K562 (cell line): ENCODE measurements at regions of chr11 and their contacts with region 1.

Region 1: GRCh38 chr11:32960553-32961164 is 55.0 kb upstream of the DEPDC7 start:
- DNase-seq: peak in 3 of 4 experiments; percentile 6 to 55 (median 11)
- ATAC-seq: peak; percentile 67
- H3K4me3 ChIP-seq: no peak overlapping the region
- H3K27ac ChIP-seq: no peak overlapping the region
- H3K4me1 ChIP-seq: no peaks in the 10 kb centered on the region
- H3K27me3 ChIP-seq: no peaks in the 10 kb centered on the region
- CTCF ChIP-seq: peak in 2 of 3 experiments; percentile 42 to 79; a peak in 4 of 6 replicates
- EP300 ChIP-seq: no peak
- POLR2A ChIP-seq: no peak
- RAD21 ChIP-seq: peak; percentile 76 to 84

Region 2: GRCh38 chr11:32884770-32885384 is 75.8 kb before region 1 on chr11:
- CTCF ChIA-PET with region 1: no interaction called
- POLR2A ChIA-PET with region 1: no interaction called
- in situ Hi-C with region 1: no loop called
- intact Hi-C with region 1: loop called (anchors 10 kb)
- DNase-seq: peak in 3 of 4 experiments; percentile 23 to 38 (median 29)
- ATAC-seq: peak; percentile 90
- H3K4me3 ChIP-seq: no peak overlapping the region
- H3K27ac ChIP-seq: no peak overlapping the region
- H3K4me1 ChIP-seq: no peaks in the 10 kb centered on the region
- H3K27me3 ChIP-seq: peaks cover 0 to 6% of the 10 kb centered on the region in 2 experiments; a peak in 2 of 5 replicates
- CTCF ChIP-seq: peak; percentile 21 to 68 (median 56); a peak in 5 of 6 replicates
- EP300 ChIP-seq: no peak
- POLR2A ChIP-seq: no peak
- RAD21 ChIP-seq: peak in 1 of 2 experiments; percentile 60; a peak in 3 of 4 replicates

Region 3: GRCh38 chr11:33329705-33330329 is 369.2 kb after region 1 on chr11:
- CTCF ChIA-PET with region 1: interaction called, 3 read pairs
- POLR2A ChIA-PET with region 1: no interaction called
- in situ Hi-C with region 1: loop called (anchors 25 kb)
- intact Hi-C with region 1: loop called (anchors 5 kb)
- DNase-seq: peak; percentile 26 to 74 (median 40)
- ATAC-seq: peak; percentile 96
- H3K4me3 ChIP-seq: no peak overlapping the region
- H3K27ac ChIP-seq: no peak overlapping the region
- H3K4me1 ChIP-seq: no peaks in the 10 kb centered on the region
- H3K27me3 ChIP-seq: no peaks in the 10 kb centered on the region
- CTCF ChIP-seq: peak; percentile 68 to 85 (median 72)
- EP300 ChIP-seq: no peak
- POLR2A ChIP-seq: no peak
- RAD21 ChIP-seq: peak; percentile 75 to 88

Region 4: GRCh38 chr11:33531743-33532181 is 571.1 kb after region 1 on chr11:
- CTCF ChIA-PET with region 1: no interaction called
- POLR2A ChIA-PET with region 1: no interaction called
- in situ Hi-C with region 1: no loop called
- intact Hi-C with region 1: no loop called
- DNase-seq: no peak
- ATAC-seq: no peak
- H3K4me3 ChIP-seq: no peak overlapping the region
- H3K27ac ChIP-seq: no peak overlapping the region
- H3K4me1 ChIP-seq: no peaks in the 10 kb centered on the region
- H3K27me3 ChIP-seq: peaks cover 0 to 13% of the 10 kb centered on the region in 2 experiments; a peak in 2 of 5 replicates
- CTCF ChIP-seq: no peak
- EP300 ChIP-seq: no peak
- POLR2A ChIP-seq: no peak
- RAD21 ChIP-seq: no peak

Region 5: DNA sequence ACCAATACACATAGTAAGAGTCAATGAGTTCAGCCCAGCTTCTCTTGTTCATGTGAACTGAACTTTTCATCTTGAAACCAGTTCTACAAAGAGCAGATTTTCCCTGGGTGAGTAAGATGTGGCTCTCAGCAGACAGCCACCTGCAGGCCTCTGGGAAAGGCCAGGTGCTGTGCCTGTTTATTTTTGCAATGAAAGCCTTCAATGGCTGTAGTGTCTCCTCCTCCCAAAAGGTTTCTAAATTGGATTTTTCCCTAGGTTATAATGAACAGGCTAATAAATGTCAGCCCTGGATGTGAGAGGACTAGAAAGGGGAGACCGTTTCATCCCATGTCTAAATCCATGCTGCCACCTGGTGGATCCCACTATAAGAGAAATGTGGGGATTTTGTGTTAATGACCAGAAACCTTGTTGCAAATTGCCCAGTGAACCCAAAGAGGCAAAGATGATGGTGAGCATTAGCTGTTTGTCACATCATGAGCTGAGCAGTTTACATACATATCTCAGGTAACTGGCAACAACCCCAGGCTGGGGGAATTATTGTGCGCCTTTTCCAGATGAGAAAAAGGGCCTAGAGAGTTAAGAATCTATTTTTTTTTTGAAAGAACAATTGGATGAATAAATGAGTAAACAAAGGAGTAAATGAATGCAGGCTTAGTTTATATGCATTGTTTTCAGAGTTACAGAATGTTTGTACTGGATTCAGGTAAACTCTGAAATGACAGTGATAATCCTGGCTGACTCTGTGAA is 727.2 kb after region 1 on chr11:
- CTCF ChIA-PET with region 1: interaction called, 11 read pairs
- POLR2A ChIA-PET with region 1: no interaction called
- in situ Hi-C with region 1: no loop called
- intact Hi-C with region 1: loop called (anchors 5 kb)
- DNase-seq: peak; percentile 40 to 72 (median 59)
- ATAC-seq: peak; percentile 80
- H3K4me3 ChIP-seq: no peak overlapping the region
- H3K27ac ChIP-seq: no peak overlapping the region
- H3K4me1 ChIP-seq: peaks cover 5 to 10% of the 10 kb centered on the region in 2 experiments; a peak in 4 of 5 replicates
- H3K27me3 ChIP-seq: peaks cover 3 to 18% of the 10 kb centered on the region in 2 experiments; a peak in 4 of 5 replicates
- CTCF ChIP-seq: peak; percentile 77 to 89 (median 79)
- EP300 ChIP-seq: no peak
- POLR2A ChIP-seq: no peak
- RAD21 ChIP-seq: peak; percentile 70 to 94